ENCODE measurements at regions of chr10 and their contacts with region 1.

Region 1: GRCh38 chr10:100433253-100434240 is 29.3 kb upstream of the WNT8B start:
- DNase-seq: peak; percentile 85
- CTCF ChIP-seq: peak; percentile 98

Region 2: DNA sequence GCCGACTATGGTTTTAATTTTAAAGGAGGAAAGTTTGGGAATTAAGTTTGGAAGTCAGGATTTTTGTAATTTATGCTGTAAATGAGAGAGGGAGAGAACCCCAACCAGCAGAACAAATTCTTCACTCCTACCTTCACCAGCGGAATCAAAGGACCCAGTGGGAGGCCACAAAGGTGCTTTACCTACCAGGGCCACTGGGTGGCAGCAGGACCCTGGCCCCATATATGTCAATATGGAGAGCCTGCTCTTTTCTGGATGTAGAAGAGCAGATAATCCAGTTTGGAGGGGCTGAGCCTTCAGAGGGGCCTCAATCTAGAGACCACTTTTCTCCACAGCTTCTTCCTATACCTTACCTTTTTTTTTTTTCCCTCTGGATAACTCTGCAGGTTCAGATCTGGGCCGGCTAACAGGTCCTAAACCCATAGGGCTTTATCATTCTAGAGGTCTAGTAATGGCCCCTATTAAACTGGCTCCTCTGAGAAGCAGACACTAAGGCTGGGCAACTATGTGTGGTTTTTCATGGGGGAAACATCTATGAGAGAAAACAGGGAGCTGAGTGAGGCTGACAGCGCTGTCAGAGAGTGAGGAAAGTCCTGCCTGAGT is 95.0 kb before region 1 on chr10:
- CTCF ChIA-PET with region 1: interaction called, 147 read pairs
- POLR2A ChIA-PET with region 1: no interaction called
- DNase-seq: peak; percentile 81
- CTCF ChIP-seq: peak; percentile 89

Region 3: GRCh38 chr10:100346765-100347567 is 86.6 kb before region 1 on chr10 and contains the start of gene SCD:
- CTCF ChIA-PET with region 1: interaction called, 147 read pairs
- POLR2A ChIA-PET with region 1: no interaction called
- DNase-seq: peak; percentile 95
- CTCF ChIP-seq: no peak

Region 4: DNA sequence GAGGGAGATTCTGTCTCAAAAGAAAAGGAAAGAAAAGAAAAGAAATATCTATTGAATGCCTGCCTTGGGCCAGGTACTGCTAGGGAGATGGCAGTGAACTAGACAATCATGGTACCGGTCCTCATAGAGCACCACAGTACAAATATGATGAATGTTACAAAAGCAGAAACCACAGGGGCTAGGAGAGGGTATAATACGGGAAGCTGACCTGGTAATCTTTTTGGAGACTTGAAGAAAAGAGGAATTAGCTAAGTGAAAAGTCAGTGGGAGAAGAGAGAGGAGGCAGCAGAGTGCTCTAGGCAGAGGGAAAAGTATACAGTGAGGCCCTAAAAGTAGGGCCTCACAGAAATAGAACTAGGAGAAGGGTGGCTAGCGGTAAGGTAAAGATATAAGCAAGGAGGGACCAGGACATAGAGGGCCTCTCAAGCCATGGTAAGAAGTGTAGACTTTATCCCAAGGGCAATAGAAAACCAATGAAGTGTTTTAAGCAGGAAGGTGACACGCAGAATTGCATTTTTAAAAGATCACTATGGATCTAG is 13.6 kb before region 1 on chr10:
- CTCF ChIA-PET with region 1: interaction called, 12 read pairs
- POLR2A ChIA-PET with region 1: no interaction called
- DNase-seq: no peak
- CTCF ChIP-seq: no peak

Region 5: GRCh38 chr10:100508691-100509150 is 75.2 kb after region 1 on chr10:
- CTCF ChIA-PET with region 1: interaction called, 21 read pairs
- POLR2A ChIA-PET with region 1: no interaction called
- DNase-seq: peak; percentile 53
- CTCF ChIP-seq: peak; percentile 34

Measured in GM10248 (cell line).